ENCODE measurements at regions of chr17 and their contacts with region 1.

Region 1: DNA sequence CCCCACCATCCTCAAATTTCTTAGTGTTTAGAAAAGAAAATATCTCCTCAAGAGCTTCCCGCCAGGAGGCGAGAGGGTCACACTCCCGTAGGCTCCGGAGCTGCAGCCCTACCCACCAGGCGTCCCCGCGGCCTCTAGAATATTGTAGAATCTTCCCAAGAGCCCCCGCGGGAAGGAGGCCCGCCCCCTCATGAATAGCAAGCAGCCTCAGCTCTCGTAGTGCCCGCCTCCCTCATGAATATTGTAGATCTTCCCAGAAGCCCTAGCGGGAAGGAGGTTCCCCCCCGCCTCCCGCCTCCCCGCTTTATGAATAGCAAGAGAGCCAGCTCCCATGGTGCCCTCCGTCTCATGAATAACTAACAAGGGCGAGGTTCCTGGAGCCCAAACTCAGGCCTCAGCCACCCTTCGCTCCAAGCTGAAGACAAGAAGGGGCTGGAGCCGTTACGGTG is at the start of gene FBXO47:
- DNase-seq: peak; percentile 64
- ATAC-seq: peak; percentile 99
- H3K4me3 Mint-ChIP-seq: peak within 1 kb of the TSS; percentile 78
- H3K27ac Mint-ChIP-seq: peak within 1 kb of the TSS; percentile 85
- H3K4me1 Mint-ChIP-seq: peaks cover 10% of the 10 kb centered on the region
- H3K27me3 Mint-ChIP-seq: no peaks in the 10 kb centered on the region
- CTCF ChIP-seq: no peak
- total RNA-seq, gene FBXO47: not detected in 2 replicates

Region 2: GRCh38 chr17:38824899-38825761 is 142.2 kb before region 1 on chr17 and contains the start of gene CWC25:
- CTCF ChIA-PET with region 1: no interaction called
- POLR2A ChIA-PET with region 1: interaction called, 8 read pairs
- intact Hi-C with region 1: loop called (anchors 1 kb)
- DNase-seq: peak; percentile 99
- ATAC-seq: peak; percentile 80
- H3K4me3 Mint-ChIP-seq: peak within 1 kb of the TSS; percentile 98
- H3K27ac Mint-ChIP-seq: peak within 1 kb of the TSS; percentile 99
- H3K4me1 Mint-ChIP-seq: peaks cover 29% of the 10 kb centered on the region
- H3K27me3 Mint-ChIP-seq: peaks cover 3% of the 10 kb centered on the region
- CTCF ChIP-seq: no peak
- total RNA-seq, gene CWC25: 35.6 and 38.3 TPM in 2 replicates

Region 3: DNA sequence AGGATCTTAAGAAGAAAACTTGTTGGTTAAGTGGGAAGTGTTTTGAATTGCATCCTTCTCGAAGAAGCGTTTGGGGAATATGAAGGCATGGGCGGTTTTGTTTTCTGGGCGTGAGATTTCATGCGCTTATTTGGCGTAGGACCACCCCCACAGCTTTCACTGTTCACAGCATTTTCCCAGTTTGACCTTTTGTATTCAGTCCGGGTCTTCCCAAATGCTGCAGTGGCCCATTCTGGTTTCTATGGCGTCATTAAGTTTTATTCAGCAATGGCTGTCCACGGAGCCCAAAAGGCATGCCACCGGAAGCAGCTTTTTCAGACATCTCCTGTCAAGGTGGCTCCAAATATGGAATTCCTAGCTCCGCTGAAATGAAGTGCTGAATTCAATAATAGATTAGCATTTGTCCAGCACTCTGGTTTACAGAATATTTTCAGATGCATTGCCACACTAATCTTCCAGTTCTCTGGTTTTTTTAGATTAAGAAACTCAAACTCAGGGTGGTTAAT is 90.4 kb after region 1 on chr17:
- CTCF ChIA-PET with region 1: no interaction called
- POLR2A ChIA-PET with region 1: interaction called, 11 read pairs
- intact Hi-C with region 1: no loop called
- DNase-seq: no peak
- ATAC-seq: no peak
- H3K4me3 Mint-ChIP-seq: peak overlapping the region; percentile 87
- H3K27ac Mint-ChIP-seq: no peak overlapping the region
- H3K4me1 Mint-ChIP-seq: peaks cover 9% of the 10 kb centered on the region
- H3K27me3 Mint-ChIP-seq: peaks cover 6% of the 10 kb centered on the region
- CTCF ChIP-seq: no peak

Region 4: DNA sequence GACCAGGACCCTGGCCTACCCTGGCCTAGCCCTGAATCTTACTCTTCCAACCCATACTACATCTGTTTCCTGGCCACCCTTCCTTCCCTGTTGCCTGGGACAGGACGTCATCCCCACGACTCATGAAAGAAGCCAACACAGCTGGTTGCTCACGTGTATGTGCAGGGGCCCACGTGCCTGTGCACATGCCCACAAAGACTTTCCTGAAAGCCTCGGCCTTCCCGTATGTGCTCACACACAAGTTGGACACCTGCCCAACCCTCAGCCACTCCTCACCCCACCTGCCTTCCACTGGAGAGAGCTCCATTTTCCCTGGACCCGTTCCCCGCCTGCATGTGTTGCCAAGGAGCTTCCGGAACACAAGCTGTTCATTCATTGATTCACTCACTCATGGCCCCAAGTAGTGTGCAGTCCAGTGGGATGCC is 177.1 kb after region 1 on chr17:
- CTCF ChIA-PET with region 1: no interaction called
- POLR2A ChIA-PET with region 1: no interaction called
- intact Hi-C with region 1: no loop called
- DNase-seq: no peak
- ATAC-seq: no peak
- H3K4me3 Mint-ChIP-seq: no peak overlapping the region
- H3K27ac Mint-ChIP-seq: no peak overlapping the region
- H3K4me1 Mint-ChIP-seq: no peaks in the 10 kb centered on the region
- H3K27me3 Mint-ChIP-seq: peaks cover 21% of the 10 kb centered on the region
- CTCF ChIP-seq: no peak